MCF 10A (cell line): ENCODE measurements at regions of chr16 and their contacts with region 1.

Region 1: GRCh38 chr16:2968738-2969544 is at the start of gene PAQR4:
- DNase-seq: peak; percentile 93
- H3K4me3 Mint-ChIP-seq: peak within 1 kb of the TSS; percentile 68
- H3K27ac Mint-ChIP-seq: no peak within 1 kb of the TSS
- H3K4me1 Mint-ChIP-seq: peaks cover 5% of the 10 kb centered on the region
- H3K27me3 Mint-ChIP-seq: no peaks in the 10 kb centered on the region
- CTCF ChIP-seq: no peak
- total RNA-seq, gene PAQR4: 4.8 and 7.9 TPM in 2 replicates

Region 2: GRCh38 chr16:2980227-2981086 is 11.5 kb after region 1 on chr16 and contains the start of gene PKMYT1:
- CTCF ChIA-PET with region 1: interaction called, 5 read pairs
- POLR2A ChIA-PET with region 1: interaction called, 19 read pairs
- intact Hi-C with region 1: loop called (anchors 1 kb)
- DNase-seq: peak; percentile 87
- H3K4me3 Mint-ChIP-seq: peak within 1 kb of the TSS; percentile 73
- H3K27ac Mint-ChIP-seq: no peak within 1 kb of the TSS
- H3K4me1 Mint-ChIP-seq: peaks cover 6% of the 10 kb centered on the region
- H3K27me3 Mint-ChIP-seq: no peaks in the 10 kb centered on the region
- CTCF ChIP-seq: no peak
- total RNA-seq, gene PKMYT1: 16.9 and 34.7 TPM in 2 replicates